Activated CD4-positive, alpha-beta T cell treated with anti-CD3 and anti-CD28 coated beads for 36 hours (primary cell): ENCODE measurements at regions of chr15 and their contacts with region 1.

Region 1: DNA sequence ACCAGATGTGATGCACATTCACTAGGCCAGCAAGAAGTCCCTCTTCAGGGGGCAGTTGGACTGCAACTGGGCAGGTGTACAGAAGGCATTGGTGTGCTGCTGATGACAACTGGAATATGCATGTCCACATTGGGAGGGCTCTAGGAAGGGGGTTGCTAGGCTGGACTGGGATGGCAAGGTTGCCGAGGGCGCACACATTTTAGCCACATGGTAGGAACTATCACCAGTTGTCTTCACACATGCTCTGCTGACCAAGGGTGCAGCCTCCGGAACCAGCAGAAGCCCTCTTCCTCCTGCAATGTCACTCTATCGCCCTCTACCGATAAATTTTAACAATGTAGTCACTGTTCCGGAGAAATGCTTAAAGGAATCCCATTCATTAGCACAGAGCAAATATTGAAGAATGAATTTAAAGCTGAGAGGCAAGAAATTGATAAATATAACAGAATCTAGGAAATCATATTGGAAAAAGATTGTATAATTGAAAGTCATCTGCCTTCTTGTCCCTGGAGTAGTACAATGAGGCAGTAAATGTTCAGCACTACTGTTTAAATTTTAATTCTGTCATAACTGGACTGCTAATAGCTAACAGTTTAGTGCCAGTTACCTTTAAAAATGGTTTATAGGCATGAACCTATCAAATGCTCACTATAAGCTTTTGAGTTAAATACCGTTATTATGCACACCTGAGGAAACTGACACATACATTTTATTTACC is 22.6 kb upstream of the LYSMD4 start:
- DNase-seq: peak; percentile 51
- ATAC-seq: peak; percentile 94
- H3K4me3 Mint-ChIP-seq: no peak overlapping the region
- H3K27ac Mint-ChIP-seq: no peak overlapping the region
- H3K4me1 Mint-ChIP-seq: no peaks in the 10 kb centered on the region
- H3K27me3 Mint-ChIP-seq: no peaks in the 10 kb centered on the region

Region 2: DNA sequence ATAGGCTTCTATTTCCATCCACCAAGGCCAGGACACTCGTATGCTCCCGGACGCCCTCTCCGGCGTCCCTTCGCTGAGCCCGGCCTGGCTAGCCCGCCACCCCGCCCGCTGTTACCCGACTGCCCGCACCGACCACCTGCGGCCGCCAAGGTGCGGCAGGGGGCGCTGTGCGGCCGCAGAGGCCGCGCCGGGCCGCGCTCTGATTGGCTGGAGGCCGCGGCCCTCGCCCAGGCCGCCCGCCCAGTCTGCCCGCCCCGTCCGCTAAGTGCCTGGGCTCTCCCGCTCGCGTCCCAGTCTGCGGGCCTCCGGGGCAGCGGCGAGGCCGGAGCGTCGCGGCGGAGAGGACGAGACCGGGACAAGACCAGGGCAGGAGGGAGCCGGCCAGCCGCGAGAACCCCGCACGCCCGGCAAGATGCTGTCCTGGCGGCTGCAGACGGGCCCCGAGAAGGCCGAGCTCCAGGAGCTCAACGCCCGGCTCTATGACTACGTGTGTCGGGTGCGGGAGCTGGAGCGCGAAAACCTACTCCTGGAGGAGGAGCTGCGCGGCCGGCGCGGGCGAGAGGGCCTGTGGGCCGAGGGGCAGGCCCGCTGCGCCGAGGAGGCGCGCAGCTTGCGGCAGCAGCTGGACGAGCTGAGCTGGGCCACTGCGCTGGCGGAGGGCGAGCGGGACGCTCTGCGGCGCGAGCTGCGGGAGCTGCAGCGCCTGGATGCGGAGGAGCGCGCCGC is 650.9 kb before region 1 on chr15 and contains the start of gene SYNM:
- CTCF ChIA-PET with region 1: interaction called, 3 read pairs
- POLR2A ChIA-PET with region 1: no interaction called
- intact Hi-C with region 1: loop called in 1 of 2 experiments (anchors 2 kb)
- DNase-seq: peak; percentile 64
- ATAC-seq: peak; percentile 63
- H3K4me3 Mint-ChIP-seq: peak within 1 kb of the TSS; percentile 51
- H3K27ac Mint-ChIP-seq: no peak within 1 kb of the TSS
- H3K4me1 Mint-ChIP-seq: no peaks in the 10 kb centered on the region
- H3K27me3 Mint-ChIP-seq: peaks cover 39% of the 10 kb centered on the region
- total RNA-seq, gene SYNM: 0.09 to 0.14 TPM

Region 3: DNA sequence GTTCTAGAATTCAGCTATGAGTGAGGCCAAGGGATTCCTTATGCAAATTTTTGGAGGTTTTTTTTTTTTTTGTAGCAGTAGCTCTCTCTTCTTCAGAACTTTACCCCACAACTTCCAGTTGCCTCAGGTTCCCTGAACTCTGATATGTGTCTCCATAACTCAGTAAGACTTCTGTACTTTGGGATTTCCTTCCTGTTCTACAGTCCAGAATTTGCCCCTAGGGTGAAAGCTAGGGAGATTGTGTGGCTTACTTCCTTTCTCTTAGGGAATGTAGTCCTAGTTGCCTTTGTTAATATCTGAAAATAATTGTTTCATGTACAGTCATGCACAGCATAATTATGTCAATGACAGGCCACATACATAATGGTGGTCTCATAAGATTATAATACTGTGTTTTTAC is 473.7 kb before region 1 on chr15:
- CTCF ChIA-PET with region 1: interaction called, 3 read pairs
- POLR2A ChIA-PET with region 1: no interaction called
- intact Hi-C with region 1: loop called (anchors 1 to 5 kb)
- DNase-seq: no peak
- ATAC-seq: no peak
- H3K4me3 Mint-ChIP-seq: no peak overlapping the region
- H3K27ac Mint-ChIP-seq: no peak overlapping the region
- H3K4me1 Mint-ChIP-seq: peaks cover 44% of the 10 kb centered on the region
- H3K27me3 Mint-ChIP-seq: no peaks in the 10 kb centered on the region

Region 4: DNA sequence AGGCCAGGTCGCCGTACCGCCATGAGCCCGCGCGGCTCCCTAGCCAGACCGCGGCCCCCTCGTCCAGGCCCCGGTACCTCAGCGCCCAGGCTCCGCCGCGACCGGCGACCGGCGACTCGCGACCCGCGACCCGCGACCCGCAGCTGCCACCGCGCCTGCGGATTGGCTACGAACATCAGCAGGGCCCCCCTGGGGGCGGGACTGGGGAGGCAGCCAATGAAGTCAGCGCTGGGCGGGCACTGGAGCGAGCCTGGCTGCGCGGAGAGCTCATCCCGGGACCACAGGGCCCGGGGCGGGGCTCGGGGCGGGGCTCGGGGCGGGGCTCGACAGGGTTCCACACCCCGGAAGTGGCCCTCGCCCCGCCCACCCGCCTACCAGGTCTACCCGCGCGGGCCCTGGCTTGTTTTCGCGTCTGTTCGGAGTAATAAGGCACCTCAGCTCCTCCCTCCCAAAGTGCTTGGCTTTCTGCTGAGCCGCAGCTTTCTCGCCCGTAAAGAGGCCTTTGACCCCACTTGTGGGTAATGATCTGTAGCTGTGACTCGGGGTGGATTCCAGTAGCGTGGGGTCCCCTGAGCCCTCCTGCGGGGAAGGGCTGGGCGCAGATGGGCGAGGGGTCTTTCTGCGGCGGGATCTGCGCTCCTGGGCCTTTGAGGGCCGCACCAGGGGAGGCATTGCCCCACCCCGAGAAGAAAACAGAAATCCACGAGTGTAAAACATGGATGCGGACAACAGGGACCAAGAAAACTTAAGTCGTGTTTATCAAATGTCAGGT is 22.4 kb before region 1 on chr15 and contains the start of gene LYSMD4:
- CTCF ChIA-PET with region 1: interaction called, 12 read pairs
- POLR2A ChIA-PET with region 1: no interaction called
- intact Hi-C with region 1: no loop called
- DNase-seq: peak; percentile 100
- ATAC-seq: peak; percentile 99
- H3K4me3 Mint-ChIP-seq: peak within 1 kb of the TSS; percentile 71
- H3K27ac Mint-ChIP-seq: peak within 1 kb of the TSS; percentile 91
- H3K4me1 Mint-ChIP-seq: peaks cover 23% of the 10 kb centered on the region
- H3K27me3 Mint-ChIP-seq: no peaks in the 10 kb centered on the region
- total RNA-seq, gene LYSMD4: 4.7 to 5.3 TPM